PC-9 (cell line): ENCODE measurements at regions of chr1 and their contacts with region 1.

Region 1: GRCh38 chr1:154558575-154559465 is at the start of gene UBE2Q1:
- DNase-seq: peak; percentile 87 to 98
- H3K4me3 ChIP-seq: peak within 1 kb of the TSS; percentile 98
- H3K27ac ChIP-seq: peak within 1 kb of the TSS; percentile 61
- H3K4me1 ChIP-seq: peaks cover 16% of the 10 kb centered on the region; the same call in 1 of the 2 replicates
- H3K27me3 ChIP-seq: no peaks in the 10 kb centered on the region; the same call in 1 of the 2 replicates
- CTCF ChIP-seq: no peak
- total RNA-seq, gene UBE2Q1: 52.8 and 63.3 TPM in 2 replicates

Region 2: DNA sequence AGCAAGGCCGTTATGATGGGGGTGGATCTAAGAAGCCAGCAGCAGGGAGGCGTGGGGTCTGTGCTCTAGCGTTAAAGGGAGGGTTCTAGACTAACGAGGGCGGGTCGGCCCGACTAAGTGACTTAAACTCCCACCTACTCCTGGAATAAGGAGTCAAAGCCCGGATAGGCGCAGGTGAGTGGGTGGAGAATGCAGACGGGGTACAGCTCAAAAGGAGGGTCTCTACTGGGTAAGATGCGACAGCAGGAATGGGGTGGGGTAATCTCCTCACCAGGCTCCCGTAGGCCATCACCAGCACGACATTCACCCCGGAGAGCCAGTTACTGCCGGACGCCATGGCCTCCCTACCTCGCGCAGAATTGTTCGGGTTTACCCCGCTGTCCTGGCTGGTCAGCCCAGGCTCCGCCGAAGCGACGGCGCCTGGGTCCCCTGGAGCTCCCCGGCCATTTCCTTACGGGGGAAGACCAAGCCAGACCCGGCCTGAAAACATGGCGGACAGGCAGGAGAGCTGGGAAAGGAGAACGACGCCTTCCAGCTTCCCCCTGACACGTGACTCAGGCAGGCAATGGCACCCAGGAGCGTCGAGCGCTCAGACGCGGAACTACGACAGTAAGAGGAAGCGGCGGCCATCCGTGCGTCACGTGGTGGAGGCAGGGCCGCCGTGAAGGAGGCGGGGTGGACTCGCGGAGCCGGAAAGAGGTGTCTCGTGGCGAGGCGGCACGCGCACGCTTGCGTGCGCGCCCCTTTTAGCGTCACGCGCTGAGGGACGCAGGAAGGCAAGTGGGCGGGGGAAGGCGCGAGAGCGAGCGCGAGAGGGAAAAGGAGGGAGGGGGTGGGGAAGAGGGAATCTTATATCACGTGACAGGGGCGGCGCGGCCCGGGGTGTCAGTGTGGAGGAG is 338.5 kb before region 1 on chr1 and contains the start of gene UBAP2L:
- CTCF ChIA-PET with region 1: no interaction called
- POLR2A ChIA-PET with region 1: interaction called, 10 read pairs
- intact Hi-C with region 1: no loop called
- DNase-seq: peak; percentile 94 to 98
- H3K4me3 ChIP-seq: peak within 1 kb of the TSS; percentile 99
- H3K27ac ChIP-seq: peak within 1 kb of the TSS; percentile 97
- H3K4me1 ChIP-seq: peaks cover 33% of the 10 kb centered on the region
- H3K27me3 ChIP-seq: no peaks in the 10 kb centered on the region
- CTCF ChIP-seq: no peak
- total RNA-seq, gene UBAP2L: 101 and 157 TPM in 2 replicates

Region 3: DNA sequence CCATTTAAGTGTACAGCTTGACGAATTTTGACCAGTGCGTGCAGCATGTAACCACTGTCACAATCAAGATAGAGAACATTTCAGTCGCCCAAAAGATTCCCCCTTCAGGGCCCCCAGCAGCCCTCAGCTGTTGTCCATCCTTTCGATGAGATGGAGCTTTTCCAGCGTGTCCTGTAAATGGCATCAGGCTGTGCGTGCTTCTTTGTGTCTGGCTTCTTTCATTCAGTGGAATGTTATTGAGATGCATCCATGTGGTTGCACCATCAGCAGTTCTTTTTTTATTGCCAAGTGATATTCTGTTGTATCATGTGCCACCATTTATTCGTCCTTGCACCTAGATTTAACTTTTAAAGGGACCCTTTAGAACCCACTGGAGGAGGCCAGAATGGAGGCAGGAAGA is 22.2 kb before region 1 on chr1:
- CTCF ChIA-PET with region 1: no interaction called
- POLR2A ChIA-PET with region 1: no interaction called
- intact Hi-C with region 1: no loop called
- DNase-seq: no peak
- H3K4me3 ChIP-seq: no peak overlapping the region
- H3K27ac ChIP-seq: no peak overlapping the region
- H3K4me1 ChIP-seq: no peaks in the 10 kb centered on the region
- H3K27me3 ChIP-seq: peaks cover 57% of the 10 kb centered on the region
- CTCF ChIP-seq: no peak

Region 4: DNA sequence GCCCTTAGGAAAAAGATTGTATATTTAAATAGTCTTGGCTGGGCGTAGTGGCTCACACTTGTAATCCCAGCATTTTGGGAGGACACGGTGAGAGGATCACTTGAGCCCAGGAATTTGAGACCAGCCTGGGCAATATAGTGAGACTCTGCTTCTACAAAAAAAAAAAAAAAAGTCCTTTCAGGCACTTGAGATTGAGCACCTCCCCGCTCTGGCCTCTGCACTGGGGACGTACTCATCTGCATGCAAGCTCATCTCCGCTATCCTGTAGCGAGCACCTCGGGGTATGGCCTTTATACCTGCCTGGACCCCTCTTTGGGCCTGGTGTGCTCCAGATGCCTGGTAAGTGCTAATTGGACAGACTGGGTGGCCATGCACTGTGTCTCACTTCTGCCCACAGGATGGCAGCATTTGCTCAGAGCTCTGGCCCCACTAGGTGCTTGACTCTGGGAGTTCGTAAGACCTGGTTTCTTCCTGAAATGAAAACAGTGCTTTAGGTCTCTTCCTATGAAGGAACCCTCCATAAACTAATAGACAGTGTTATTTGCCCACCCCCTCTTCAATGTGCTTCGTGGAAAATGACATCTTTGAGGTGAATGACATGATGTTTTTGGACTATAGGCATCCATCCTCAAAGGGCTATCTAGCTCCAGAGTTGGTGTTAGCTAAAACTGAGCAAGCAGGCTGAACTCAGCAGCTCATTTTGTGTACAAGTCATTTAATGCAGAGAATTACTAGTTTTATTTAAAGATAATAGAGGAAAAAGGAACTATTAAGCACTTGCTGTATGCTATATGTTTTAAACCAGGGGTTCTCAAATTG is 110.9 kb after region 1 on chr1:
- CTCF ChIA-PET with region 1: no interaction called
- POLR2A ChIA-PET with region 1: no interaction called
- intact Hi-C with region 1: loop called (anchors 1 kb)
- DNase-seq: peak; percentile 62 to 70
- H3K4me3 ChIP-seq: no peak overlapping the region
- H3K27ac ChIP-seq: no peak overlapping the region
- H3K4me1 ChIP-seq: no peaks in the 10 kb centered on the region
- H3K27me3 ChIP-seq: peaks cover 9% of the 10 kb centered on the region; the same call in 1 of the 2 replicates
- CTCF ChIP-seq: peak; percentile 84

Region 5: GRCh38 chr1:154936555-154937084 is 377.8 kb after region 1 on chr1 and contains the start of gene PMVK:
- CTCF ChIA-PET with region 1: interaction called, 6 read pairs
- POLR2A ChIA-PET with region 1: interaction called, 3 read pairs
- intact Hi-C with region 1: loop called (anchors 2 kb)
- DNase-seq: peak; percentile 87 to 95
- H3K4me3 ChIP-seq: peak within 1 kb of the TSS; percentile 62
- H3K27ac ChIP-seq: peak within 1 kb of the TSS; percentile 93
- H3K4me1 ChIP-seq: peaks cover 50% of the 10 kb centered on the region
- H3K27me3 ChIP-seq: no peaks in the 10 kb centered on the region
- CTCF ChIP-seq: peak; percentile 42; the same call in 1 of the 2 replicates
- total RNA-seq, gene PMVK: 27.1 and 38.2 TPM in 2 replicates

Region 6: DNA sequence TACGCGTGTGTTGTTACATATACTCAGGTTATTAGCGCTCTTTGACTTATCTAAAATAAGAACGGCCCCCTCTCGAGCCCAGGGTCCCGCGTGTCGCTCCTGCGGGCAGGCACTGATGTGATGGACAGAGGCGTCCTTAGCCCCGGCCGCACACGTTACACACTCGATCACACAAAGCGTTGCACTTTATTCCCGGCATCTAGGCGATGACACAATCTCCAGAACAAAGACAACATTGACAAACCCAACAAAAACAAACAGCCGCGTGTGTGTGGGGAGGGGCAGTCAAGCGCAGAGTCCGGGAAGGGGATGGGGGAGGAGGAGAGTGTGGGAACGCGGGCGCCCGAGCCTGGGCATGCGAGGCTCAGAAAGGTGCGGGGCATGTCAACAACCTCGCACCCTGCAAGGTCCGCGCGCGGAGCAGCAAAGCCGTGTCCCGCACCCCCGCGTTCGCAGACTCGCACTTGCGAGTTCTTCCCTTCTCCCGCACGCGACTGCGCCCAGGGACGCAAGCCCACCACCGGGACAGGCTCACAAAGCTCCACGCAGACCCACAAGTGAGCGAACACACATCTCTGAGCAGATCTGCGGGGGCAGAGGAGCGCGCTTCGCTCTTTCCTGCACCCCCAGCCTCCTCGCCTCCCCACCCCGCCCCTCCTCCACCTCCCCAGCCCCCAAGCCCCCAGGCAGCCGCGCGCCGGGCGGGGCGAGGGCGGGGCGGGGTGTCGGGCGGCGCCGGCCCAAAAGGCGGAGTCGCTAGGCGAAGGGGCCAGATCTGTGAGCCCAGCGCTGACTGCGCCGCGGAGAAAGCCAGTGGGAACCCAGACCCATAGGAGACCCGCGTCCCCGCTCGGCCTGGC is 568.5 kb after region 1 on chr1 and contains the start of gene EFNA1:
- CTCF ChIA-PET with region 1: no interaction called
- POLR2A ChIA-PET with region 1: no interaction called
- intact Hi-C with region 1: loop called (anchors 5 kb)
- DNase-seq: peak; percentile 70 to 79
- H3K4me3 ChIP-seq: peak within 1 kb of the TSS; percentile 85
- H3K27ac ChIP-seq: peak within 1 kb of the TSS; percentile 98
- H3K4me1 ChIP-seq: peaks cover 59% of the 10 kb centered on the region
- H3K27me3 ChIP-seq: no peaks in the 10 kb centered on the region
- CTCF ChIP-seq: no peak
- total RNA-seq, gene EFNA1: 30.6 and 35.7 TPM in 2 replicates